ENCODE measurements at regions of chrX and their contacts with region 1.

Region 1: GRCh38 chrX:83469551-83469950 is 38.5 kb upstream of the POU3F4 start:
- DNase-seq: peak; percentile 20
- ATAC-seq: peak; percentile 88
- H3K4me3 Mint-ChIP-seq: no peak overlapping the region
- H3K27ac Mint-ChIP-seq: no peak overlapping the region
- H3K4me1 Mint-ChIP-seq: no peaks in the 10 kb centered on the region; the same call in 1 of the 2 replicates
- H3K27me3 Mint-ChIP-seq: no peaks in the 10 kb centered on the region
- CTCF ChIP-seq: no peak

Region 2: DNA sequence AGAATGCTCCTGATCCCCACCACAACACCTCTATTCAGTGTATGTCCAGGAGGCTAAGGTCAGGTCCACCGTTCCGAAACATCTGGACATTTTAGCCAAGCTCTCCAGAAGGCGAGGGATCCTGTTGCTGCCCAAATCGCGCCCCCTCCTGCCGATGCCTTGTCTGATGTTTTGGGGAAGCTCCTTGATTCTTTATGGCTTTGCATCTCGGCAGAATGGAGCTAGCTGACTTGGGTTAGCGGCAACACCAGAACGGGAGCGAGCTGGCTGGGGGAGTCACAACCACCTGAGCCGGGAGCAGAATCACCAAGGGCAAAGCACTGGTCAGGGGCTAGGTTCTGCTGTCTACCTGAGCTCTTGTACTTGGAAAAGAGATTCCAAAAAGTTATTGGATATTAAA is 32.0 kb after region 1 on chrX:
- CTCF ChIA-PET with region 1: interaction called, 18 read pairs
- POLR2A ChIA-PET with region 1: no interaction called
- DNase-seq: peak; percentile 26
- ATAC-seq: peak; percentile 65
- H3K4me3 Mint-ChIP-seq: peak overlapping the region; percentile 67
- H3K27ac Mint-ChIP-seq: no peak overlapping the region
- H3K4me1 Mint-ChIP-seq: peaks cover 61% of the 10 kb centered on the region
- H3K27me3 Mint-ChIP-seq: peaks cover 54% of the 10 kb centered on the region
- CTCF ChIP-seq: no peak

Region 3: DNA sequence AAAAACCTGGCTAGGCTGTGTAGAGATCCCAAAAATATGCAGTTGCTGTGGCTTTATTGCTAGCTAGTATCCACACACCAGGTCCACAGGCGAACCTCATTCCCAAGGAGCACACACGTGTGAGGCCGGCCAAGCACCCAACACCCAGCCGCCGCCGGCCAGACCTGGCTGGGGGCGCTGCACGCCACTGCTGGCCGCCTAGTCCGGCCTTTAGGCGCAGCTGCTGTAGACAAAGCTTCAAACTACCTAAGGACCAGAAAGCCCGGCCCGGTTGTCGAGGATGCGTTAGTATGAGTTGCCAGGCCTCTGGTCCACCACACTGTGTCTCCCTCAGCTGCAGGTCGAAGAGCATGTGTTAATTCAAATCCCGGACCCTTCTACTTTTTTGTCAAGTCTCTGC is 41.7 kb after region 1 on chrX:
- CTCF ChIA-PET with region 1: interaction called, 11 read pairs
- POLR2A ChIA-PET with region 1: no interaction called
- DNase-seq: peak; percentile 48
- ATAC-seq: peak; percentile 21
- H3K4me3 Mint-ChIP-seq: peak overlapping the region; percentile 78
- H3K27ac Mint-ChIP-seq: no peak overlapping the region
- H3K4me1 Mint-ChIP-seq: peaks cover 59% of the 10 kb centered on the region
- H3K27me3 Mint-ChIP-seq: peaks cover 41% of the 10 kb centered on the region
- CTCF ChIP-seq: no peak

Region 4: DNA sequence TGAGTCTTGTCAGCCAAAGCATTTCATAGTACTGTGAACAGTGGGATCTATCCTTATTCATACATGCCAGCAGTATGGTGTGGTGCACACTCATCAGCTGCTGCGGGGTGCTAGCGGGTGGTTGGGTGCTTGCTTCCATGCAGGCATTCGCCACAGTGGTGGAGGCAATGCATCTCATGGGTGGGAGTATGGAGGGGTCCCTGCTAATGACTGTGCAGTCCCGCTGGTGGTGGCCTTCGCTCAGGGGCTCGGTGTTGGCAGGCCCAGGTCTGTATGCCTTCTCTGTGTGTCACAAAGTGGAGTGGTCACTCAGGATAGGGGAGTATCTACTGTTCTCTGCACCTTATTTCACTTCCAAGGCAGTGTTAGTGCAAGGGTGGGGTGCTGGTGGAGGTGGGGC is 161.1 kb after region 1 on chrX:
- CTCF ChIA-PET with region 1: interaction called, 37 read pairs
- POLR2A ChIA-PET with region 1: no interaction called
- DNase-seq: no peak
- ATAC-seq: no peak
- H3K4me3 Mint-ChIP-seq: no peak overlapping the region
- H3K27ac Mint-ChIP-seq: no peak overlapping the region
- H3K4me1 Mint-ChIP-seq: no peaks in the 10 kb centered on the region
- H3K27me3 Mint-ChIP-seq: no peaks in the 10 kb centered on the region
- CTCF ChIP-seq: no peak